Mucosa of descending colon (tissue), 3 donors: ENCODE measurements at regions of chr1 and their contacts with region 1.

Region 1: DNA sequence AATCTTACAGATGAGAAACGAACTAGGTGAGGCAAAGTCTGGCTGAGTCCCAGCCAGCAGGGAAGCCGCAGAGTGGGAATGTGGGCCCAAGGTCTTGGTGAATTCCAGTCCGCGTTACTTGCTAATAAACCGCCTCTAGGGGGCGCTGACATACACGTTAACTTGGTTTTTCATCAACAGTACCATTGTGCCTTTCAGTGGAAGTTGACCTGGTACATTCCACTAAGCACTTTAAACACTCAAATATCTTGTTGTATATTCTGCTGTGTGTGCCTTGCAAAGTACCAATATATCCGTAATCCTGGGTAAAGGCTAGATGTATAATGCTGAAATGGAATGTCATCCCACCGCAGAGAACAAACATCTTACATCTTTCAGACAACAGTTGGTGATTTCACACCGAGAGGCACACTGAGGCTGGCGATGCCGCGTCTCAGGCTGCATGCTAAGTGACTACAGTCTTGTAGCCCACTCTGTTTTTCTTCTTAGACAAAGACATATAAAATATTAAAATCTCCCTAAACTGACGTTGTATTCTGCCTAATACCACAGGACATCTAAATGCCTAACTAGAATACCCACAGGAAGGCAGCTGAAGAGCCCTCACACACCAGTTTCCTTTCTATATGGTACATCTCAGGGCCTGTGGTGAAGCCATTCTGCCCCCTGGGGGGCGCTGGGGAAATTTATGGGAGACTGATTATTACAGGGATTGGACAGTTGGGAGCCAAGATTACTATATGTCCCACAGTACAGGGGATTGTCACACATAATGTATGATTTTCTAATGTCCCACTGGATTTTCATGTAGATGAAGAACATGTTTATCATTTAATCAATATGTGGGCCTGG is 49.2 kb upstream of the C1orf198 start:
- DNase-seq: peak in 2 of 3 donors; percentile 65 to 98
- ATAC-seq: peak; percentile 89
- H3K4me3 ChIP-seq: no peak overlapping the region
- H3K4me1 ChIP-seq: no peaks in the 10 kb centered on the region
- CTCF ChIP-seq: peak; percentile 52

Region 2: DNA sequence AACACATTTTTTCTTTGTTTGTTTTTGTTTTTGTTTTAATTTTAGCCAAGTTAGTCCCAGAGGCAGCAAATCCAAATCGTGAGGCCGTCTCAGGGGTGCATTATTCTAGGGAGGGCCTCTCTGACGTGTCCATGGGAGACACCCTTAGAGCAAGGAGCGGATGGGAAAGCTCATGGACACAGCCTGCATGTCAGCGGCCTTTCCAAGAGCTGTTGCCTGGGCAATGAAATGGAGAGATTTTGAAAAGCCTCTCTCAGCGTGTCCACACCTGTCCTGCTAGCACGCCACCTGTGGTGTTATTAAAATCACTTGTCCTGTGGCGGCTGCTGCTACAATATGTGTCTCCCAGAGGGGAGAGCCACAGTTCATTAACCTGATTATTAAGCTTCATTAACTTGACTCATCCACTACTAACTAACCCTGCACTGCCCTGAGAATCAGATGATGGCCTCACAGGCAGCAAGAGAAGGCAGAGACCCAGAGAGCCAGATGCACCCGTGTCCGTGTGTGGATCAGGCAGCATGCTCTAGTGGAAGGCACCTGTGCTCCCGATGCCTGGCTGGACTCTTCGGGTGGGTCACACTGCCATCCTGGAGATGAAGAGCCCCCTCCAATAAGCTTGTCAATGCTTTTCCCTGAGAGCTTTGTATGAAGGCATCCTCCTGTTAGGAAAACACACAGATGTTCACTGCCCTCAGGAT is 624.7 kb before region 1 on chr1:
- intact Hi-C with region 1: no loop called
- DNase-seq: peak in 1 of 3 donors; percentile 0
- ATAC-seq: no peak
- H3K4me3 ChIP-seq: no peak overlapping the region
- H3K4me1 ChIP-seq: no peaks in the 10 kb centered on the region
- CTCF ChIP-seq: no peak

Region 3: GRCh38 chr1:231211005-231211857 is 293.7 kb after region 1 on chr1:
- intact Hi-C with region 1: loop called in 1 of 2 experiments (anchors 5 kb)
- DNase-seq: peak; percentile 91 to 95 (median 93)
- ATAC-seq: peak; percentile 96
- H3K4me3 ChIP-seq: no peak overlapping the region
- H3K4me1 ChIP-seq: peaks cover 10% of the 10 kb centered on the region
- CTCF ChIP-seq: peak; percentile 87